ENCODE measurements at regions of chr7 and their contacts with region 1.

Region 1: DNA sequence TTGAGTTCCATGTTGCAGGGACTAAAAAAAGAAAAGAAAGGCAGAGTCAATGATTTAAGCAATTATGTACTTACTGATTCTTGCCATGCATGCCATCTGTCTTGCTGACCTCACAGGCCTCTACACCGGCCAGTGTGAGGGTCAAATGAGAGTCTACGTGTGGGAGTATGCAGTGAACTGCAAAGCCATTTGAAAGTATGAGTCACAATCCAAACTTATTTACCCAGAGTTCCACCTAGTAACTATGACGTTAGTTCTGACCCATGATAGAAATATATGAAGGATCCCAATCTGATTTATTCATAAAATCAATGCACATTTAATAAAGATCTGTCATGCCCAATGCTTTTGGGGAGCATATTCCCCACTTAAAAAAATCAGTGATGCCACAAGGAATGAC is 26.5 kb downstream of the PDE1C start:
- DNase-seq: peak; percentile 47
- H3K4me3 Mint-ChIP-seq: no peak overlapping the region
- H3K27ac Mint-ChIP-seq: peak overlapping the region; percentile 37
- H3K4me1 Mint-ChIP-seq: peaks cover 65% of the 10 kb centered on the region
- H3K27me3 Mint-ChIP-seq: no peaks in the 10 kb centered on the region
- CTCF ChIP-seq: no peak

Region 2: GRCh38 chr7:31782411-31782991 is 261.2 kb before region 1 on chr7:
- CTCF ChIA-PET with region 1: no interaction called
- intact Hi-C with region 1: loop called (anchors 2 kb)
- DNase-seq: peak; percentile 57
- H3K4me3 Mint-ChIP-seq: no peak overlapping the region
- H3K27ac Mint-ChIP-seq: no peak overlapping the region
- H3K4me1 Mint-ChIP-seq: peaks cover 6% of the 10 kb centered on the region
- H3K27me3 Mint-ChIP-seq: no peaks in the 10 kb centered on the region
- CTCF ChIP-seq: peak; percentile 92

Region 3: DNA sequence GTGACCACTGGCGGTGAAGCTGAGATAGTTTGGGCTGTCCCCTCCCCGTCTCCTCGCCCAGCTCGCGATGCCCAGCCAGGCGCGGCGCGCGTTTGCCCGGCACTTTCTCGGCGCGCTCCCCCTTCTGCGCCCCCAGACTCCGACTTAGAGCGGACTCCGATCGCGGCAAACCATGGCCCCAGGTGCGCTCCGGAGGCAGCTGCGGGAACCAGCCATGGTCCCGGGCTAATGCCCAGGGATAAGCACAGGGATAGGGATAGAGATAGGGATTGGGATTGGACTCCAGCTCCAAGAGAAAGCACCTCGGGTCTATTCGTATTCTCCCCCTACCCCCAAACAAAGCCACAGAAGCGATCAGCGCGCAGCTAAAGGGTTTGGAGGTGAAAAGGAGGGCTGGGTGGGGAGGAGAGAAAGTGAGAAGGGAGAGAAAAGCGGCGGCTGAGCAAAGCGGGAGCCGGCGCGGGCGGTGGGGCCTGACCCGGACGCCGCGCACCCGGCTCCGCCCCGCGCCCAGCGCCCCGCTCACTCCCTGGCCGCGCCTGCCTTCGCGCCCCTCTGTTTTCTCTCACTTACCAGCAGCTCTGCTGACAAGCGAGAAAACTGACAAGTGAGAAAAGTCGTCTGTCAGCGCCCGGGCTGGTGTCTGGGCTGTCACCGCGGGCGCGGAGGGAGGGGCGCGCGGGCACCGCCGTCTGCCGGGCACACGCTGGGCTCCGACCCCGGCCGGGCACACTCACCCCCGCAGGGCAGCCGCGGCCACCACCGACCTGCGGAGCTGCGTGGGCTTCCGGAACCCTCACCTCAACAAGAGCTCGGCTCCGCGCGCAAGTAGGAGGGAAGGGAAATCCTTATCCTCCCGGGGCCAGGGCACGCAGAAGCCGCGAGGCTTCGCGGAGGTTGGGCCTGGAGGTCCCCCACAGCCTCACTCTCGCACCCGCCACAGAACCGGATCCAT is 27.0 kb after region 1 on chr7 and contains the start of gene PDE1C:
- CTCF ChIA-PET with region 1: interaction called, 6 read pairs
- intact Hi-C with region 1: loop called (anchors 2 kb)
- DNase-seq: peak; percentile 65
- H3K4me3 Mint-ChIP-seq: peak within 1 kb of the TSS; percentile 95
- H3K27ac Mint-ChIP-seq: peak within 1 kb of the TSS; percentile 48
- H3K4me1 Mint-ChIP-seq: peaks cover 64% of the 10 kb centered on the region
- H3K27me3 Mint-ChIP-seq: no peaks in the 10 kb centered on the region
- CTCF ChIP-seq: no peak
- total RNA-seq, gene PDE1C: 25.1 and 34.0 TPM in 2 replicates

Measured in Calu3 (cell line).